ENCODE measurements at regions of chr12 and their contacts with region 1.

Region 1: DNA sequence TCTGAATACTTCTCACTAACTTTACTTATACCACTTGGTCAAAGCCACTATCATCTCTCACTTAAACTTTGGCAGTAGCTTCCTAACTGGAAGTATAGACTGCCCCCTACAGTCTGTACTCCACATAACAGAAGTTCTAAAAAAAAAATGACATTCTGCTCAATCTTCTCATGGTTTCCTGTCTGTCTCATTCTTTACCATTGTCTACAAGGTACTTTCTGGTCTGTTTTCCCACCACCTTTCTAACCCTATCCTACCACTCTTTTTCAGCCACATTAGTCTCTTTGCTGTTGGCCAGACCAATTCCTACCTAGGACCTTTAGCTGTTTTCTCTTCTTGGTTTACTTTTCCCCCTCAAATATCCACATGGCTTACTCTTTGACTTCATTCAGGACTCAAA is 14.7 kb downstream of the CPSF6 start:
- DNase-seq: no peak

Region 2: DNA sequence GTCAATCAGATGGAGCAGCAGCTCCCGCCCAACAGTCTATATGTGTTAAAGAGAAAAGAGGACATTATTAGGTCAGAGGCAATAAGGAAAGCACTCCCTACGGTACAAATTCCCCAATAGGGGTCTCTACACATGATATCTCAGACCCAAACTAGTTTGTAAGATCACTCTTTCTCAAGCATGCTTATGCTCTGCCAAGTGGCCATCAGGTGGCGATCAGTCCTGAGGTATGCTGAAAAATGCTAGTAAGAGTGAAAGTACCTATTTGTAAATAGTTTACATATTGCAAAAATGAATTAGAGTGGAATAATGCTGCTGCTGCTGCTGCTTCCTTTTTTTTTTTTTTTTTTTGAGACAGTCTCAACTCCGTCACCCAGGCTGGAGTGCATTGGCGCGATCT is 382.1 kb before region 1 on chr12:
- intact Hi-C with region 1: no loop called
- DNase-seq: no peak

Region 3: GRCh38 chr12:69154585-69155363 is 99.3 kb before region 1 on chr12:
- intact Hi-C with region 1: loop called (anchors 2 kb)
- DNase-seq: no peak

Region 4: DNA sequence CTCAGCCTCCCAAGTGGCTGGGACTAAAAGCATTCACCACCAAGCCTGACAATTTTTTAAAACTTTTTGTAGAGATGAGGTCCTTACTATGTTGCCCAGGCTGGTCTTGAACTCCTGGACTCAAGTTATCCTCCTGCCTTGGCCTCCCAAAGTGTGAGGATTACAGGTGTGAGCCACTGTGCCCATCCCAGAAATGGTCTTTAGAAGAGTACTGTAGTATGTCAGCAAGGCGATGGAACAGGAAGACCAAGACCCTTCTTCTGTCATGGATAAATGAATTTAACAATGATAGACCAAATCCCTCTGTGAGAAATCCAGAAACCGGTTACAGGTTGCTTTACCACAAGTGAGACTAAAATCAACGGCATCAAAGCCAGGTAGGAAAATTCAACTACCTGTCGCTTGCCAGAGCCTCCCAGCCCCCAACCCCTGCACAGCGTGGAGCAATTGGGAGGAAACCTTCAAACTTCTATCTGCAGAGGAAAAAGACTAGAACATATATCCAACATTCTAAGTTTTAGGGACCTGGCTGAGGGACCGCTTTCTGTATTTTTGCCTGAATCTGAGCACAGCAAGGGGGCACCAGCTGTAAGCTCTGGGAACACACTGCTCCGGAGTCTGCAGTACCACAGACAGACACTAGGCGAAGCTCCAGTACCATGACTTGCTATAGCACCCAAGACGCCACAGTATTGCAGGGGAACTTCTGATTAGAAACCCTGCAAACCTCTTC is 36.7 kb after region 1 on chr12:
- intact Hi-C with region 1: no loop called
- DNase-seq: no peak

Measured in cardiac septum (tissue), 1 donor.